ENCODE measurements at regions of chr12 and their contacts with region 1.

Region 1: GRCh38 chr12:82527165-82527780 is 159.4 kb upstream of the TMTC2 start:
- DNase-seq: peak in 6 of 10 donors; percentile 33 to 49 (median 44)
- H3K4me3 ChIP-seq: peak overlapping the region in 45 of 59 donors; percentile 2 to 56 (median 31)
- H3K27ac ChIP-seq: peak overlapping the region in 37 of 59 donors; percentile 3 to 88 (median 53)
- H3K27me3 ChIP-seq: no peaks in the 10 kb centered on the region
- CTCF ChIP-seq: peak; percentile 72 to 97 (median 89)

Region 2: GRCh38 chr12:82383930-82384552 is 143.2 kb before region 1 on chr12:
- intact Hi-C with region 1: loop called (anchors 10 kb)
- DNase-seq: no peak
- H3K4me3 ChIP-seq: no peak overlapping the region
- H3K27ac ChIP-seq: no peak overlapping the region
- H3K27me3 ChIP-seq: no peaks in the 10 kb centered on the region
- CTCF ChIP-seq: peak; percentile 21 to 77 (median 62)

Region 3: DNA sequence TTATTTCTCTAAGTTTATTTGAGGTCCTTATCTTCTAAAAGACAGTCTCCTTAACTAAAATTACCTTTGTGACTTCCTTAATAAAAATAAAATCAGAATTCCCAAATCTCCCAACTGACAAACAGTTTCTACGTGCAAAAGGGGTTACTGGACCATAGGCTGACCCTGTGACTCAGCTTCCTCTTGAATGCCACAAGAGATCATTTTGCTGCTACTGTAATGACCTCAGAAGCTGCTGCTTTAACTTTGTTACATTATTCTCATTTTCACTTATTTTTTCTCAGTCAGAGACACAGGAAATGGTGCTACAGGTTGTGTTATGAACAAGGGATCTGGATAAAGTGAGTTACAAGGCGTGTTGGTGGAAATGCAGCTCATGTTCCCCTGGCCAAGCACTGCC is 27.3 kb after region 1 on chr12:
- intact Hi-C with region 1: no loop called
- DNase-seq: no peak
- H3K4me3 ChIP-seq: no peak overlapping the region
- H3K27ac ChIP-seq: no peak overlapping the region
- H3K27me3 ChIP-seq: no peaks in the 10 kb centered on the region
- CTCF ChIP-seq: no peak

Region 4: DNA sequence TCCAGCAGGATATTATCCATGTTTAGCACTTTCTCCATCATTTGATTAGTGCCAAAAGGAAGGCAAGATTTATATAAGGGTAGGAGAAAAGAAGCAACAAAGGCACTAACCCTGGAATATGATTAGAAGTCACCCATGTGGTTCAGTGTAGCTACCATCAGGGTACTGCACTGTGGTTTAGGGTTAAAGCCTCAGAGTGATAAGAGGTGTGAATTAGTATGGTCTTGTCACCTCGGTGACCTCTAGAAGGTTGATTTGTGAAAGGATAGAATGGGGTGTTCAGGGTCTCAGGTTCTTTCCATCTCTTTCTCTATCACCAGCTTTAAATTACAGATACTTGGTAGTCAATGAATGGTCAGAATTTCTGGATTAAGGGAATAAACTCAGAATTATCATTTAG is 56.5 kb after region 1 on chr12:
- intact Hi-C with region 1: no loop called
- DNase-seq: no peak
- H3K4me3 ChIP-seq: no peak overlapping the region
- H3K27ac ChIP-seq: no peak overlapping the region
- H3K27me3 ChIP-seq: no peaks in the 10 kb centered on the region
- CTCF ChIP-seq: no peak

Region 5: DNA sequence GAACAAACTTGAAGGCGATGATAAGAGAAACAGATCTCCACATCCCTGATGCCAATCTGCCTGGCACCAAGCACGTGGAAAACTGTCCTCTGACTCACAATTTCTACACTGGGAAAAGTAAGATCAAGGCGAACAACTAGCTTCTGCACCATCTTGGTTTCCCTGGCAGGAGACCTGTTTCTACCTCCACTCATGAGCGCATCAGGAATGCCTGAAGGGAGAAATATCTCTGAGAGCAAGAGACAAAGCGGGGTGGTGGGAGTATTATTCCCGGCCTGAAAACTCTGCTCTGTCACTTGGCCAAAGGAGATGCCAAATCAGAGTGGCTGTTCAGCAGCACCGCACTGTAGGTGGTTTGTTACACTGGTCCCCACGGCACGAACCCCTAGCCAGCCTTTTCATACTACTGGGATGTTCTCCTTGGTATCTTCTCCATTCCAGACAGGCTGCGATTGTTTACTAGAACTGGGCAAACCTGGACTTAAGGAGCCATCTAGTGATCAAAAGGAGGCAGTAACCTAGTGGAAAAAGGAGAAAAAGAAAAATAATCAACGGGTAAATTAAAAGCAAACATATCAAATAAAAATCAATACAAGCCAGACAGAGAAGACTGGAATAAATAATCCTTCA is 100.4 kb after region 1 on chr12:
- intact Hi-C with region 1: loop called (anchors 2 to 5 kb)
- DNase-seq: peak in 1 of 10 donors; percentile 17
- H3K4me3 ChIP-seq: no peak overlapping the region
- H3K27ac ChIP-seq: peak overlapping the region in 27 of 59 donors; percentile 0 to 98 (median 93)
- H3K27me3 ChIP-seq: no peaks in the 10 kb centered on the region
- CTCF ChIP-seq: peak in 54 of 56 donors; percentile 15 to 68 (median 46)

Region 6: GRCh38 chr12:82758749-82759330 is 231.6 kb after region 1 on chr12:
- intact Hi-C with region 1: loop called in 1 of 2 experiments (anchors 5 kb)
- DNase-seq: no peak
- H3K4me3 ChIP-seq: no peak overlapping the region
- H3K27ac ChIP-seq: peak overlapping the region in 52 of 59 donors; percentile 2 to 80 (median 50)
- H3K27me3 ChIP-seq: no peaks in the 10 kb centered on the region
- CTCF ChIP-seq: peak in 38 of 56 donors; percentile 9 to 65 (median 36)

Measured in dorsolateral prefrontal cortex (tissue), 120 donors.